ENCODE measurements at regions of chr3 and their contacts with region 1.

Region 1: DNA sequence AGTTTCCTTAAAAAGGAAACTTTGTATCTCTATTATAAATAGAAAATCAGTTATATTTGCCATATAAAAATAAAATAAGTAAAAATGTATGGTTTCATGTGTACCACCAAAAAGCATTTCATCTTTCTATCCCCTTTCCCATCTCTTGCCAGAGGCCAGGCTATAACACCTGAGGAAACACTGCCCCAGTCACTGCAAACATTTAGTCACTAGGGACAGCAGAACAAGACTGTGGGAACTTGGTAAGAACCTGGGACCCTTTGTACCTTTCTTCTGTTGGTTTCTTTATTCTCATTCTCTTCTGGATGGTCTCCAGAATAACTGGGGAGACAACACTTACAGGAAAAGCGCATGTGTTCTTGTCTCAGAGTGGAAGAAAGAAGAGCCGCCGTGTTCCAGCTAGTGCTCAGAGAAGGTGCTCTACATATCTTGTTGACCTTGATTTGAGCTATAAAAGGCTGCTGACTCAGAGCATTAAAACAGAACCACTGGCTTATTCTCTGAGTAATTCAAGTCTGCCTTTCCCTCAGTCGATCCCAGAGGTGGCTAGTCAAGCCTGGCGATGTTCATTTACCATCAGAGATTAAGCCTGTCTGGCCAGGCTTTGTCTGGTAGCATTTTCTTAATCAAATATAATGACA is 361.6 kb downstream of the RBMS3 start:
- DNase-seq: peak; percentile 61 to 67
- ATAC-seq: peak; percentile 99
- H3K4me3 ChIP-seq: peak overlapping the region in 3 of 4 donors; percentile 3 to 26 (median 13)
- H3K27ac ChIP-seq: peak overlapping the region; percentile 82 to 85 (median 83)
- H3K4me1 ChIP-seq: peaks cover 58 to 66% of the 10 kb centered on the region in 2 donors
- H3K27me3 ChIP-seq: no peaks in the 10 kb centered on the region
- CTCF ChIP-seq: no peak
- POLR2A ChIP-seq: peak; percentile 12 to 25

Region 2: DNA sequence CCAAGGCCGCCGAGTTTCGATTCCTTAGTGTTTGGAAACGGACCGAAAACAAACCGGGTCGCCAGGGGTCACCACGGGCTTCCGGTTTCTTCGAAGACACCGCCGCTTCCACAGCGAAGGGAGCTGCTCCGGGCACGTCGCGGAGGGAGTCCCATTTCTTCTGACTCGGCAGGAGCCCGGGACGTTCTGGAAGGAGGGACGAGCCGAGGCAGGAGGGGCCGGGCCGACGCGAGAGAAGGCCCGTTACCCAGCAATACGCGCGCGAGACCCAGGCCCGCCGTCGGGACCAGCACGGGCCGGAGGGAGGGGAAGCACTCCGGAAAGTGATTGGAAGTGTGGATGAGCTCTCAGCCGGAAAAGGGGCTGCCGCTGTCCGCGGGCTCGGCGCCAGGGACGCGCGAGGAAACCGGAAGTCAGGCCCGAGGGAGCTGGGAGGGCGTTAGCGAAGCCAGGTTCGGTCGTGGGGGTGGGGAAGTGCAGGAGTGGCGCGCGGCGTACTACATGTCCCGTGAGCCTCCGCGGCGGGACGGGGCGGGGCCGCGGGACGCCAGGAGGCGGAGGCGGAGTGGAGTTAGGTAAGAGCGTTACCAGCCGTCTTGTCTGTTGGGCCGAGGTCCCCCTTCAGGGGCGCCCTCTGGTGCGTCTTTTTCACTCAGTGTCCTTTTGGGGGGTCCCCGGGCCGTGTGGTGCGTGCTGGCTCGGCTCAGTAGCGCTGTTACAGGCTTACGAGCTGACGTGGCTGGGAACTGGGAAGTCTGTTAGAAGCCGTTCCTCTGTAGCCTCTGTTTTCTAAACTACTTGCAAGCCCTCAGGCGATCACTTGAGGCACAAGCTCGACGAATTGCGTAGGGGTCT is 1293.7 kb before region 1 on chr3 and contains the starts of genes AZI2 and ZCWPW2:
- in situ Hi-C with region 1: no loop called
- intact Hi-C with region 1: loop called (anchors 5 kb)
- DNase-seq: peak; percentile 95 to 97
- ATAC-seq: peak; percentile 87 to 91
- H3K4me3 ChIP-seq: peak within 1 kb of the TSS; percentile 76 to 98 (median 92)
- H3K27ac ChIP-seq: peak within 1 kb of the TSS; percentile 94 to 100 (median 98)
- H3K4me1 ChIP-seq: peaks cover 44 to 48% of the 10 kb centered on the region in 2 donors
- H3K27me3 ChIP-seq: no peaks in the 10 kb centered on the region
- CTCF ChIP-seq: peak in 3 of 5 experiments; percentile 18 to 38 (median 34)
- POLR2A ChIP-seq: peak; percentile 93
- total RNA-seq, gene AZI2: 27.6 to 90.9 (median 59.2) TPM
- total RNA-seq, gene ZCWPW2: 0.55 to 1.6 (median 1.3) TPM in 3 of 4 donors, not detected in the other

Region 3: GRCh38 chr3:29759411-29760225 is 117.1 kb after region 1 on chr3:
- in situ Hi-C with region 1: no loop called
- intact Hi-C with region 1: loop called (anchors 5 kb)
- DNase-seq: peak; percentile 15 to 28
- ATAC-seq: peak; percentile 73 to 74
- H3K4me3 ChIP-seq: peak overlapping the region; percentile 8 to 37 (median 16)
- H3K27ac ChIP-seq: peak overlapping the region; percentile 71 to 82 (median 78)
- H3K4me1 ChIP-seq: peaks cover 37 to 39% of the 10 kb centered on the region in 2 donors
- H3K27me3 ChIP-seq: no peaks in the 10 kb centered on the region
- CTCF ChIP-seq: no peak
- POLR2A ChIP-seq: no peak